AG04449 (cell line): ENCODE measurements at regions of chr7 and their contacts with region 1.

Region 1: DNA sequence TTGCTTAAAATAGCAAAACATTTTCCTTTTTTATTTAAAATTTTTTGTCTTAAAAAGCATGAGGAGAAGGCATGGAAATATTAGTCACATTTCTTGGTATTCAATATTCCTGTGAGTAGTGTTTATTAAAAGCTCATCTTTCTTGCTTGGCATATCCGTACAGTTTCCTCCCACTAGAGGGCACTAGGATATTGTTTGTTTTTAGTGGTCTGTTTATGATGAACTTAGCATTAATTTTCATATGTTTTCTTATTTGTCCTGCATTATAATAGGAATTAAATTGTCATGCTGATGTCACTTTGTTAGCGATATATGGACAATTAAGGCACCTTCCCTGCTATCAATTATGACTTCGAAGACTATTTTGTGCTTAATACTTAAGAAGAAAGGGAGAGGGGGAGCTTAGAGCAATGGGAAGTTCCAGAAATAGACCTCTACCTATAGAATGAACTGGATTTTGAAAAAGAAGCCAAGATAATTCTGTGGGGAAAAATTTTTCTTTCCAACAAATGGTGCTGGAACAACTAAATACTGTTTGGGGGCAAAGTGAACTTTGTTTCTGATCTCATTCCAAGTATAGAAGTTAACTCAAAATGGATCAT is 91.0 kb upstream of the STRIP2 start:
- DNase-seq: no peak
- H3K4me3 ChIP-seq: no peak overlapping the region
- CTCF ChIP-seq: peak; percentile 48

Region 2: GRCh38 chr7:129332284-129333035 is 10.7 kb before region 1 on chr7:
- CTCF ChIA-PET with region 1: interaction called, 52 read pairs
- POLR2A ChIA-PET with region 1: no interaction called
- DNase-seq: no peak
- H3K4me3 ChIP-seq: no peak overlapping the region
- CTCF ChIP-seq: no peak

Region 3: DNA sequence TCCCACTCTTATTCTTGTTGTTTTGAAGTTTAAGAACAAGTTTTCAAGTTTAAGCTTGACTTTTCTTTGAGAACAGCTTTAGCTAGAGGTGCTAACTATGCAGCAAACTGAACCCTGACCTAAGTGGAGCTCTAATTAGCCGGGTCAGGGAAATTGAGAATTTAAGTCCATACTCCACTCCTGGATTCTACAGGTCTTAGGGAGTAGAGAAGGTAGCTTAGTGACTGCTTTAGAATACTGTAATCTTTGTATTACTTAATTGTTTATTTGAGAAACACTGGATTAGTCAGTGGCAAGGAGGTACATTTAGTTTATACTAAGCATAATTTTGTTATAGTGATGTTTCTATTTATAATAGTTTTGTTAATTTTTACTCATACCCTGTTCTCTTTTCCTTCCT is 16.4 kb after region 1 on chr7:
- CTCF ChIA-PET with region 1: interaction called, 33 read pairs
- POLR2A ChIA-PET with region 1: no interaction called
- DNase-seq: no peak
- H3K4me3 ChIP-seq: no peak overlapping the region
- CTCF ChIP-seq: no peak

Region 4: GRCh38 chr7:129376076-129376777 is 33.0 kb after region 1 on chr7:
- CTCF ChIA-PET with region 1: interaction called, 45 read pairs
- POLR2A ChIA-PET with region 1: no interaction called
- DNase-seq: no peak
- H3K4me3 ChIP-seq: no peak overlapping the region
- CTCF ChIP-seq: peak; percentile 47

Region 5: GRCh38 chr7:129480674-129481365 is 137.6 kb after region 1 on chr7:
- CTCF ChIA-PET with region 1: interaction called, 14 read pairs
- POLR2A ChIA-PET with region 1: no interaction called
- DNase-seq: no peak
- H3K4me3 ChIP-seq: no peak overlapping the region
- CTCF ChIP-seq: no peak